Colonic mucosa (tissue), 4 donors: ENCODE measurements at regions of chr20 and their contacts with region 1.

Region 1: GRCh38 chr20:36064658-36065426 is 89.7 kb upstream of the EPB41L1 start:
- DNase-seq: peak; percentile 99
- H3K4me3 ChIP-seq: peak overlapping the region; percentile 76
- H3K27ac ChIP-seq: peak overlapping the region; percentile 74
- H3K4me1 ChIP-seq: peaks cover 5% of the 10 kb centered on the region
- H3K27me3 ChIP-seq: no peaks in the 10 kb centered on the region
- CTCF ChIP-seq: no peak

Region 2: GRCh38 chr20:36132802-36133211 is 68.0 kb after region 1 on chr20:
- intact Hi-C with region 1: loop called (anchors 10 kb)
- DNase-seq: no peak
- H3K4me3 ChIP-seq: no peak overlapping the region
- H3K27ac ChIP-seq: no peak overlapping the region
- H3K4me1 ChIP-seq: no peaks in the 10 kb centered on the region
- H3K27me3 ChIP-seq: no peaks in the 10 kb centered on the region
- CTCF ChIP-seq: no peak